ENCODE measurements at regions of chr9 and their contacts with region 1.

Region 1: GRCh38 chr9:34591248-34591916 is 1.9 kb upstream of the CNTFR start:
- DNase-seq: no peak
- H3K4me3 ChIP-seq: peak overlapping the region; percentile 28 to 73 (median 56)
- H3K27ac ChIP-seq: peak overlapping the region in 3 of 4 donors; percentile 15 to 62 (median 55)
- H3K4me1 ChIP-seq: peaks cover 29 to 64% (median 31%) of the 10 kb centered on the region in 3 donors
- H3K27me3 ChIP-seq: peaks cover 0 to 82% (median 2%) of the 10 kb centered on the region in 4 donors
- CTCF ChIP-seq: peak; percentile 81 to 91 (median 86)
- POLR2A ChIP-seq: no peak

Region 2: GRCh38 chr9:34403554-34404380 is 187.6 kb before region 1 on chr9:
- intact Hi-C with region 1: loop called (anchors 10 kb)
- DNase-seq: no peak
- H3K4me3 ChIP-seq: no peak overlapping the region
- H3K27ac ChIP-seq: no peak overlapping the region
- H3K4me1 ChIP-seq: no peaks in the 10 kb centered on the region
- H3K27me3 ChIP-seq: no peaks in the 10 kb centered on the region
- CTCF ChIP-seq: peak; percentile 83 to 98 (median 95)
- POLR2A ChIP-seq: no peak

Region 3: DNA sequence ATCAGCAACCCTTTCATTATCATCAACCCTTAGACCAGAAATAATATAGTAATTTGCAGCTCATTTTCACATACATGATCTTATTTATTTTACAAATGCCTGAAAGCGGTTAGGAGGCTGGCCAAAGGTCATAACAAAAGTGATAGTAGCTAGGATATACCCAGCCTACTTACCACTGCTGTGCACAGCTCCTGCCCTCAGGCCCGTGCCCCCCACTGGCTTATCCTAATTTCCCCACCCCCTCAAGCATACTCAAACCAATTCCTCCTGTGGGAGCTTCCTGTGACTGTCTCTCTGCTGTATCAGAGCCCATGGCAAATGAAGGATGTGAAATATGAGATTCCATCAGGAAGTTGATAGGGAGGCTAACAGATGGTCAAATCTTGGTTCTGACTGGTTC is 147.8 kb before region 1 on chr9:
- intact Hi-C with region 1: loop called (anchors 5 kb)
- DNase-seq: no peak
- H3K4me3 ChIP-seq: no peak overlapping the region
- H3K27ac ChIP-seq: no peak overlapping the region
- H3K4me1 ChIP-seq: peaks cover 0 to 13% (median 0%) of the 10 kb centered on the region in 3 donors
- H3K27me3 ChIP-seq: no peaks in the 10 kb centered on the region
- CTCF ChIP-seq: no peak
- POLR2A ChIP-seq: no peak